Endothelial cell of umbilical vein (primary cell): ENCODE measurements at regions of chr4 and their contacts with region 1.

Region 1: GRCh38 chr4:40325189-40326019 is 9.7 kb upstream of the CHRNA9 start:
- DNase-seq: peak; percentile 73
- H3K4me3 ChIP-seq: no peak overlapping the region
- H3K27ac ChIP-seq: no peak overlapping the region
- H3K4me1 ChIP-seq: no peaks in the 10 kb centered on the region
- H3K27me3 ChIP-seq: peaks cover 4 to 5% of the 10 kb centered on the region in 2 experiments
- CTCF ChIP-seq: peak; percentile 74 to 80
- POLR2A ChIP-seq: no peak

Region 2: DNA sequence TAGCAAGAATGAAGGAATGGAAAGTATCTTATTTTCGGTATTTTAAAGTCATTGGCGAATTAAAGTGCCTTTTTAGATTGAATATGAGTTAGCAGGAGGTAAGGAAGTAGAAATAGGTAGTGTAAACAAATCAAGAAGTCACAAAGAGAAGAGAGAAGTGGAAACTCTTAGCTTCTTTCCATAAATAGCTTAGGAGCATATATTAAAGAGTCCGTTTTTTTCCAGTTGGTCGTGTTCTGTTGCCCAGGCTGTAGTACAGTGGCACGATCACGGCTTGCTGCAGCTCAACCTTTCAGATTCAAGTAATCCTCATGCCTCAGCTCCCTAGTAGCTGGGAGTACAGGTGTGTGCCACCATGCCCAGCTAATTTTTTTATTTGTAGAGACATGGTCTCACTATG is 571.1 kb before region 1 on chr4:
- CTCF ChIA-PET with region 1: no interaction called
- POLR2A ChIA-PET with region 1: no interaction called
- dilution Hi-C with region 1: no loop called
- intact Hi-C with region 1: no loop called
- DNase-seq: no peak
- H3K4me3 ChIP-seq: no peak overlapping the region
- H3K27ac ChIP-seq: no peak overlapping the region
- H3K4me1 ChIP-seq: no peaks in the 10 kb centered on the region
- H3K27me3 ChIP-seq: no peaks in the 10 kb centered on the region
- CTCF ChIP-seq: no peak
- POLR2A ChIP-seq: no peak

Region 3: GRCh38 chr4:40149960-40150385 is 175.4 kb before region 1 on chr4:
- CTCF ChIA-PET with region 1: interaction called, 24 read pairs
- POLR2A ChIA-PET with region 1: no interaction called
- dilution Hi-C with region 1: no loop called
- intact Hi-C with region 1: loop called (anchors 1 kb)
- DNase-seq: peak; percentile 66
- H3K4me3 ChIP-seq: no peak overlapping the region
- H3K27ac ChIP-seq: no peak overlapping the region
- H3K4me1 ChIP-seq: no peaks in the 10 kb centered on the region
- H3K27me3 ChIP-seq: no peaks in the 10 kb centered on the region
- CTCF ChIP-seq: peak; percentile 66 to 70
- POLR2A ChIP-seq: no peak